Caco-2 (cell line): ENCODE measurements at regions of chr2 and their contacts with region 1.

Region 1: GRCh38 chr2:37196320-37197195 is at the start of gene CEBPZOS:
- DNase-seq: peak; percentile 89 to 93
- H3K4me3 ChIP-seq: peak within 1 kb of the TSS; percentile 57
- H3K4me3 Mint-ChIP-seq: peak within 1 kb of the TSS; percentile 92
- H3K27ac Mint-ChIP-seq: peak within 1 kb of the TSS; percentile 98
- H3K4me1 ChIP-seq: no peaks in the 10 kb centered on the region
- H3K4me1 Mint-ChIP-seq: no peaks in the 10 kb centered on the region
- H3K27me3 ChIP-seq: no peaks in the 10 kb centered on the region
- H3K27me3 Mint-ChIP-seq: no peaks in the 10 kb centered on the region
- CTCF ChIP-seq: no peak
- total RNA-seq, gene CEBPZOS: 55.3 and 56.0 TPM in 2 replicates

Region 2: DNA sequence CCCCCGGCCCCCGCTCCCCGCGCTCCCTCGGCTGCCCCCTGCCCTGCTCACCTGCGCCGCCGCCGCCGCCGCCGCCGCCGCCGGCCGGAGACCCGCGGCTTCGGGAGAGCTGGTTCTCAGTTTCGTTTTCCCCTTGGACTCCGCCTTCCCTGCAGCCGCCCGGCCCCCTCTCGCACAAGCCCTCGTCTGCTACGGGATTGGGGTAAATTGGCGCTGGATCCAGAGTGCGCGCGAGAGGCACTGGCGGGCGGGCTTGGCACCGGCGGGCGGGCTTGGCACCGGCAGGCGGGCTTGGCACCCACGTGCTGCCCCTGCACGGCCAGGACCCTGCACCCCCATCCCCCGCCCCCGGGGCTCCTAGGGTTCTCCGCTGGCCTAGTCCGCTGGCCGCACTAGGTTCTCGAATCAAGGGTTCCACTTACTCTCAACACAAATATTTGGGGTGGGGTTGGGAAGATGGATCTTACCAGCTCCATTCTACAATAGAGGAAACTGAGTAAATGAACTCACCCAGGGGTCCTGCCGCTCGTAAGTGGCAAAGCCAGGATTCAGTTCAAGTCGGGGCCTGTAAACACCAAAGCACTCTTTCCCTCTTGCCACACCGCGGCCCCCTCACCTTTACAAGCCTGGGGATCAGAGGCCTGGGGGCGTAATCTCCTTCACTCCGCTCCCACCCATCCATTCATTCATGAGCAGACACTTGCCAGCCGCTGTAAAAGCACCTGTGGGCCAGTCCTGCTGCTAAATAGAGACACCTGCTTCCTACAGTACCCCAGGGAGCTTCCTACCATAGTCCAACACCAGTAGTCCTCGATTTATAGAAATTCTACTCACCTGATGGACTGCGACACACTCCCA is 39.5 kb before region 1 on chr2 and contains the start of gene EIF2AK2:
- CTCF ChIA-PET with region 1: no interaction called
- POLR2A ChIA-PET with region 1: interaction called, 5 read pairs
- intact Hi-C with region 1: loop called (anchors 5 kb)
- DNase-seq: peak; percentile 91
- H3K4me3 ChIP-seq: peak within 1 kb of the TSS; percentile 85
- H3K4me3 Mint-ChIP-seq: peak within 1 kb of the TSS; percentile 96
- H3K27ac Mint-ChIP-seq: peak within 1 kb of the TSS; percentile 95
- H3K4me1 ChIP-seq: peaks cover 12% of the 10 kb centered on the region
- H3K4me1 Mint-ChIP-seq: peaks cover 37% of the 10 kb centered on the region
- H3K27me3 ChIP-seq: no peaks in the 10 kb centered on the region
- H3K27me3 Mint-ChIP-seq: no peaks in the 10 kb centered on the region
- CTCF ChIP-seq: no peak
- total RNA-seq, gene EIF2AK2: 41.7 and 50.1 TPM in 2 replicates

Region 3: GRCh38 chr2:37231241-37232130 is 34.9 kb after region 1 on chr2 and contains the starts of genes CEBPZ and NDUFAF7:
- CTCF ChIA-PET with region 1: no interaction called
- POLR2A ChIA-PET with region 1: interaction called, 4 read pairs
- intact Hi-C with region 1: loop called (anchors 1 kb)
- DNase-seq: peak; percentile 91 to 92
- H3K4me3 ChIP-seq: peak within 1 kb of the TSS; percentile 98
- H3K4me3 Mint-ChIP-seq: no peak within 1 kb of the TSS
- H3K27ac Mint-ChIP-seq: no peak within 1 kb of the TSS
- H3K4me1 ChIP-seq: peaks cover 11% of the 10 kb centered on the region
- H3K4me1 Mint-ChIP-seq: peaks cover 7% of the 10 kb centered on the region
- H3K27me3 ChIP-seq: no peaks in the 10 kb centered on the region
- H3K27me3 Mint-ChIP-seq: no peaks in the 10 kb centered on the region
- CTCF ChIP-seq: no peak
- total RNA-seq, gene CEBPZ: 93.3 and 95.4 TPM in 2 replicates
- total RNA-seq, gene NDUFAF7: 34.3 and 38.0 TPM in 2 replicates

Region 4: DNA sequence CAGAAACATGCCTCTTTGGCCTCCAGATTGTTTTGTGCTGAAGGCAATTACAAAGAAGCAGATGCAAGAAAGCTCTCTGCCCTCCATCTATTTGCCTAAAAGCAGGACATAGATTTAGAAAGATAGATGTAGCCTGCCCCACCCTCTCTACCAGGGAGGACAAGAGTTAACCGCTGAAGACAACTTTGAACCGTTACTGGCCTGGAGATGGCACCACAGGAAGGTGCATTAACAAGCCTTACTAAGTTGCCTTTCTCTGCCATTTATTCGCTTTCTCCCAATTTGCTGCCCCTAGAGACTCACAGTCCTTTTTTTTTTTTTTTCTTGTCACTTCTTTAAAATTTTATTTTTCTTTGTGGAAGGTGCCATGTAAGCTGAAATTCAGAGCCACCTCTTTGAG is 699.8 kb after region 1 on chr2:
- CTCF ChIA-PET with region 1: no interaction called
- POLR2A ChIA-PET with region 1: no interaction called
- intact Hi-C with region 1: no loop called
- DNase-seq: peak in 1 of 2 experiments; percentile 14
- H3K4me3 ChIP-seq: no peak overlapping the region
- H3K4me3 Mint-ChIP-seq: no peak overlapping the region
- H3K27ac Mint-ChIP-seq: no peak overlapping the region
- H3K4me1 ChIP-seq: peaks cover 19% of the 10 kb centered on the region
- H3K4me1 Mint-ChIP-seq: peaks cover 10% of the 10 kb centered on the region
- H3K27me3 ChIP-seq: no peaks in the 10 kb centered on the region
- H3K27me3 Mint-ChIP-seq: no peaks in the 10 kb centered on the region
- CTCF ChIP-seq: no peak